ENCODE measurements at regions of chr14 and their contacts with region 1.

Region 1: GRCh38 chr14:36070031-36070719 is 106.3 kb downstream of the PTCSC3 start:
- DNase-seq: no peak
- H3K4me3 ChIP-seq: no peak overlapping the region
- H3K4me3 Mint-ChIP-seq: no peak overlapping the region
- H3K27ac ChIP-seq: no peak overlapping the region
- H3K27ac Mint-ChIP-seq: no peak overlapping the region
- H3K4me1 ChIP-seq: no peaks in the 10 kb centered on the region
- H3K4me1 Mint-ChIP-seq: no peaks in the 10 kb centered on the region
- H3K27me3 ChIP-seq: no peaks in the 10 kb centered on the region
- H3K27me3 Mint-ChIP-seq: peaks cover 7 to 12% of the 10 kb centered on the region in 2 donors

Region 2: GRCh38 chr14:36293824-36294223 is 223.6 kb after region 1 on chr14:
- CTCF ChIA-PET with region 1: no interaction called
- POLR2A ChIA-PET with region 1: no interaction called
- intact Hi-C with region 1: no loop called
- DNase-seq: no peak
- H3K4me3 ChIP-seq: no peak overlapping the region
- H3K4me3 Mint-ChIP-seq: no peak overlapping the region
- H3K27ac ChIP-seq: no peak overlapping the region
- H3K27ac Mint-ChIP-seq: no peak overlapping the region
- H3K4me1 ChIP-seq: no peaks in the 10 kb centered on the region
- H3K4me1 Mint-ChIP-seq: no peaks in the 10 kb centered on the region
- H3K27me3 ChIP-seq: no peaks in the 10 kb centered on the region
- H3K27me3 Mint-ChIP-seq: no peaks in the 10 kb centered on the region

Region 3: DNA sequence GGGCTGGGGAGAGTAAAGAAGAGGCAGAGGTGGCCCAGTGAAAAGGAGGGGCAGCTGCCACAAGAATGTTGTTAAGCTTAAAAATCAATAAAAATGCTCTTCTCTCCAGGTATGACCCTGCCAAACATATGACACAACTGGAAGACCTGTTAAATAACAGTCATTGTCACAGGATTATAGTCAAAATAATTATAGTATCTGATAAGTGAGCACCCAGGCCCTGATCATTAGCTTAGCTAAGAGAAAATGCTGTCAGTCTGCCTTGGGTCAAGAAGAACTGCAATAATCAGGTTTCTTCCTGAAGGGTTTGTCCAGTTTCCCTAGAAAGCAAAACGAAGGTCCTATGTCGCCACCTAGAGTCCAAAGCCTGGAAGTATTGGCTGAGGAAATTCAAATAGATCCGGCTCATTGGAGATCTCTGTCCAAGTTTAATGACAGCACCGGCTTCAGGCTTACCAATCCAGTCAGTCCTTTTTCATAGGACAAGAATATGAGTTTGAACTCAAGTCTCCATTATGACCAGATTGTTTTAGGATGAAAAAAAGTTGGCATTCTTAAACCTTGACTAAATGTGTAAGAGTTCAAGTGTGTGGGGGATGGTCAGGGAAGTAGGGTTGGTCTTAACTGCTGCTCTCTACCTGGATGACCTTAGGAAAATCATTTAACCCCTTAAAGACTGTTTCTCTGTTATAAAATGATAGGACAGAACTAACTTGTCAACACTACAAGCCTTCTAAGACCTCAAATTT is 534.8 kb after region 1 on chr14:
- CTCF ChIA-PET with region 1: no interaction called
- POLR2A ChIA-PET with region 1: no interaction called
- intact Hi-C with region 1: loop called (anchors 10 kb)
- DNase-seq: peak in 3 of 5 donors; percentile 5 to 18 (median 15)
- H3K4me3 ChIP-seq: no peak overlapping the region
- H3K4me3 Mint-ChIP-seq: no peak overlapping the region
- H3K27ac ChIP-seq: no peak overlapping the region
- H3K27ac Mint-ChIP-seq: no peak overlapping the region
- H3K4me1 ChIP-seq: no peaks in the 10 kb centered on the region
- H3K4me1 Mint-ChIP-seq: no peaks in the 10 kb centered on the region
- H3K27me3 ChIP-seq: no peaks in the 10 kb centered on the region
- H3K27me3 Mint-ChIP-seq: peaks cover 8 to 15% of the 10 kb centered on the region in 2 donors

Measured in CD4-positive, alpha-beta memory T cell (primary cell).